ENCODE measurements at regions of chr9 and their contacts with region 1.

Region 1: GRCh38 chr9:120783602-120784047 is 9.6 kb downstream of the FBXW2 start:
- DNase-seq: no peak
- H3K4me3 ChIP-seq: no peak overlapping the region
- H3K27ac ChIP-seq: no peak overlapping the region
- H3K4me1 ChIP-seq: peaks cover 4% of the 10 kb centered on the region
- CTCF ChIP-seq: no peak

Region 2: GRCh38 chr9:120348951-120349429 is 434.6 kb before region 1 on chr9:
- CTCF ChIA-PET with region 1: no interaction called
- POLR2A ChIA-PET with region 1: no interaction called
- intact Hi-C with region 1: no loop called
- DNase-seq: peak; percentile 45
- H3K4me3 ChIP-seq: no peak overlapping the region
- H3K27ac ChIP-seq: no peak overlapping the region
- H3K4me1 ChIP-seq: no peaks in the 10 kb centered on the region
- CTCF ChIP-seq: peak; percentile 81

Region 3: GRCh38 chr9:121066850-121067249 is 283.2 kb after region 1 on chr9:
- CTCF ChIA-PET with region 1: no interaction called
- POLR2A ChIA-PET with region 1: interaction called, 10 read pairs
- intact Hi-C with region 1: no loop called
- DNase-seq: no peak
- H3K4me3 ChIP-seq: no peak overlapping the region
- H3K27ac ChIP-seq: no peak overlapping the region
- H3K4me1 ChIP-seq: peaks cover 57% of the 10 kb centered on the region
- CTCF ChIP-seq: no peak

Measured in OCI-LY7 (cell line).